Activated CD8-positive, alpha-beta T cell treated with anti-CD3 and anti-CD28 coated beads for 36 hours (primary cell): ENCODE measurements at regions of chr1 and their contacts with region 1.

Region 1: DNA sequence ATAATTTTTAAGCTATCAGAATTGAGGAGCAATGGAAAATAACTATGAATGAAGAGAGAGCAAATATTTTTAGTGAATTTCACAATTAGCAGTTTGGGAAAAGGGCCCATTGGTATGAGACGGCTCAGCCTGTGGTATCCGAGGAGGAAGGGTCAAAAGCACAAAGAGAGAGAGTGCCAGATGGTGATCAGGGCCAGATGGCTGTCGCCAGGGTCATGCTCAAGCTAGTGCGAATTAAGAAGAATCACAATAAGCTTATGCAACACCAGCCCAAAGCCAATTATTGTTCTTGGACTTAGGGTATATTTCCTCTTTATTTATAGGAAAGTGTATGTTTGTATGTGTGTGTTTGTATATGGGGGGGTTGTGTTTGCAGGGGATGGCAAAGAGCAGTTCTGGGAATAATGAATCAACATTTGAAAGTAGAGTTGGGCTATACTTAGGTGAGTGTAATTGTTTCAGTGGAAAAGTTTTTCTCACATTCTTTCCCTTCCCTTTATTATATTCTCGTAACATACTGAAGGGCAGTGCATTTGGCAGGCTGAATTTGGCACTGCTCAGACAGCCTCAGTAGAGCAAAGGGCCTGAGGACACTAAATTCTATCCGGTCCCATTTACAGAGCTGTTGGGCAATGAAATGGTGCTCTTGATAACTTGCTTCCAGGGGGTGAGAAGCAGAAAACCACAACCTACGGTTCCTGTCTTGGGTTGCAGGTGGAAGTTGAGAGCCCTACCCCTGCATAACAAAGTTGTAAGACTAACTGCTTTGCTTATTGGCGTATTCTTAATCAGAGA is 19.5 kb upstream of the DDR2 start:
- DNase-seq: no peak
- ATAC-seq: no peak
- H3K4me3 Mint-ChIP-seq: no peak overlapping the region
- H3K27ac Mint-ChIP-seq: no peak overlapping the region
- H3K4me1 Mint-ChIP-seq: peaks cover 3% of the 10 kb centered on the region
- H3K27me3 Mint-ChIP-seq: no peaks in the 10 kb centered on the region
- CTCF ChIP-seq: no peak

Region 2: DNA sequence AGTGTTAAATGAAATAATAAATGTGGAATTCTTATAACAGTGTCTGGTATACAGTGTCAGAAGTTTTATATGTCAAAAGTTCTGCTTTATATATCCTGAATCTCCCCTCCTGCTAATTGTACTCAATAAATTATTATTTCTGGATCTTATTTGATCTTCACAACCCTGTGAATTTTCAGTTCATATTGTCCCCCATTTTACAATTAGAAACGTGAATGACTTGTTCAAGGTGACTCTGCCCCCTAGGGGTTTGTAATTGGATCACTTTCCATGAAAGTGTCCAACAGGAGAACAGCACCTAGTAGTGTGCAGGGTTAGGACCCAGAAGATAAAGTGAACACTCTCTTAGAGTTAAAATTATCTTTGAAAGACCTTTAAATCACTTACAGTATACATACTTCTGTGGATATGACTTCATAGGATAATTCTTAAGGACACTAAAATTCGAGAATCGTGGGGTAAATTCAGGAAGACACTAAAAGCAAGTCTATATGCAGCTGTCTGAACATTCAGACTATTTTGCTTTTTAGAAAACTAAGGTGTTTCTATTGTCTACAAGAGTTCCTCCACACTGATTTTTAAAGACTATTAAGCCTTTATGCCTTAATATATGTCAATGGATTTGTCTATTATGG is 15.0 kb after region 1 on chr1:
- CTCF ChIA-PET with region 1: interaction called, 12 read pairs
- POLR2A ChIA-PET with region 1: no interaction called
- intact Hi-C with region 1: no loop called
- DNase-seq: peak; percentile 10
- ATAC-seq: no peak
- H3K4me3 Mint-ChIP-seq: no peak overlapping the region
- H3K27ac Mint-ChIP-seq: no peak overlapping the region
- H3K4me1 Mint-ChIP-seq: peaks cover 2% of the 10 kb centered on the region
- H3K27me3 Mint-ChIP-seq: peaks cover 5% of the 10 kb centered on the region
- CTCF ChIP-seq: peak; percentile 68

Region 3: GRCh38 chr1:162676087-162676486 is 63.3 kb after region 1 on chr1:
- CTCF ChIA-PET with region 1: no interaction called
- POLR2A ChIA-PET with region 1: no interaction called
- intact Hi-C with region 1: no loop called
- DNase-seq: no peak
- ATAC-seq: no peak
- H3K4me3 Mint-ChIP-seq: no peak overlapping the region
- H3K27ac Mint-ChIP-seq: no peak overlapping the region
- H3K4me1 Mint-ChIP-seq: no peaks in the 10 kb centered on the region
- H3K27me3 Mint-ChIP-seq: no peaks in the 10 kb centered on the region
- CTCF ChIP-seq: no peak

Region 4: DNA sequence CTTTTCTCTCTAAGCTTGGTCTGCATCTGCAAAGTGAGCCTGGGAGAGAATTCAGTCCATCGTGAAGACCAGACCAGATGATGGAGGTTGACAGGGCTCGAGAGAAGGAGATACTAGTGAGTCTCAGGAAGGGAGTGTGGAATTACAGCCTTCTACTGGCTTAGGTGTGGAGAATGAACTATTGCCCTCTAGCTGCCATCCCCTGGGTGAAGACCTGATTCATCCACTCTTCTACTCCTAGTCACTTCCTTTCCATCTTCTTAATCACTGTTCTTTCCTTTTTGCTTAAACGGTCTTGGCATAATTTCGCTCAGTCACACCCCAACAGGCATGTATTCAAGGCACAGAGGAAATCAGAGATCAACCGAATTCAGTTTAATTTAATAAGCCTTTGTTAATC is 143.7 kb after region 1 on chr1:
- CTCF ChIA-PET with region 1: no interaction called
- POLR2A ChIA-PET with region 1: no interaction called
- intact Hi-C with region 1: no loop called
- DNase-seq: no peak
- ATAC-seq: no peak
- H3K4me3 Mint-ChIP-seq: no peak overlapping the region
- H3K27ac Mint-ChIP-seq: no peak overlapping the region
- H3K4me1 Mint-ChIP-seq: no peaks in the 10 kb centered on the region
- H3K27me3 Mint-ChIP-seq: no peaks in the 10 kb centered on the region
- CTCF ChIP-seq: no peak

Region 5: DNA sequence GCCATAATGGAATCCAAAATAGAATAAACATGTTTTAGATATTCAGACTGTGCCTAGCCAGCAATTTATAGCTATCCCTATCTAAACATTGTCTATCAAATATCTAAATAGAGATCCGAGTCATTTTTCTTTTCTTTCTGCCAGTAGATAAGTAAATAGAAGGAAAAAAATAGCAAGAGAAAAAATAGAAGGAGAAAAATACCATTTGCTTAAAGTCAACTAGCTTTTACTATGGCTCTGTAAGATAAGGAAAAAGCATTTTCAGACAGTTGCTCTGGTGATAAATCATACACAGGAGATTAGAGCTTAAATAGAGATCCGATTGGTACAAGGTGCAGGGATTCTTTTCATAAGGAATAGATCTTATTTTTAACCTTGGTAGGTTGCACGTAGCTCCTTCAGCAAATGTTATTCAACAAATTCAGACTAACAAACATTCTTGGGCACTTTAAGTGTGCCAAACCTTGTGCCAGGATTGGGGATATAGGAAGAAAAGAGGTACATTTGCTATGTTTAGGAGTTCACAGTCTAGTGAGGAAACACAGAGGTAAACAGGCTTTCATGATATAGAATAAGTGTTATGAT is 318.3 kb after region 1 on chr1:
- CTCF ChIA-PET with region 1: no interaction called
- POLR2A ChIA-PET with region 1: no interaction called
- intact Hi-C with region 1: no loop called
- DNase-seq: no peak
- ATAC-seq: no peak
- H3K4me3 Mint-ChIP-seq: no peak overlapping the region
- H3K27ac Mint-ChIP-seq: no peak overlapping the region
- H3K4me1 Mint-ChIP-seq: no peaks in the 10 kb centered on the region
- H3K27me3 Mint-ChIP-seq: peaks cover 22% of the 10 kb centered on the region
- CTCF ChIP-seq: no peak